ENCODE measurements at regions of chr5 and their contacts with region 1.

Region 1: DNA sequence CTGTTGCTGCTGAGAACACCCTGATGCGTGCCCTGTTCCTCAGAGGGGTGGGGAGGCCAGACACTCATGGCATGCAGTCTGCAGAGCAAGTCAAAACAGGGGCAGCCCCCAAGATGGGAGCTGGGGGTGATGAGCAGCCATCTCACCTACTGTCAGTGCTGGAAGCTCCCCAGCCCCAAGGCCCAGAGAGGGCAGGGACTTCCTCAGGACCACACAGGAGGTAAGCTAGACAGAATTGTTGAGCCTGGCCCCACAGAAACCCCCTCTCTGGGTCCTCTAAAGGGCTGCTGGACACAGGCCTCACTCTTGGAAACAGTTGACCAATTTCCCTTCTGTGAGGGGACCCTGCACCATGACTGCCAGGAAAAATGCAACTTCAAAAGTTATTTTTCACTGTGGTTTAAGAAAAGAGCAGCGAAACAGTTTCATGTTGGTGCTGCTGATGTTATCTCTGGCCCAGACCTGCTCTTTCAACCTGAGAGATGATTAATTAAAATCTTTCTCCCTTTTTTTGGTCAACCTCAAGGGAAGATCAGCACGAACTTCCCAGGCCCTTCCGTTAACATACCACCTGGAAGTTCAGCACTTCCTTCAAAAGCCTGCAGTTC is 9.6 kb downstream of the CSF2 start:
- DNase-seq: peak; percentile 76
- H3K4me3 Mint-ChIP-seq: peak overlapping the region; percentile 42
- H3K27ac Mint-ChIP-seq: peak overlapping the region; percentile 81
- H3K4me1 Mint-ChIP-seq: peaks cover 72% of the 10 kb centered on the region
- H3K27me3 Mint-ChIP-seq: no peaks in the 10 kb centered on the region

Region 2: DNA sequence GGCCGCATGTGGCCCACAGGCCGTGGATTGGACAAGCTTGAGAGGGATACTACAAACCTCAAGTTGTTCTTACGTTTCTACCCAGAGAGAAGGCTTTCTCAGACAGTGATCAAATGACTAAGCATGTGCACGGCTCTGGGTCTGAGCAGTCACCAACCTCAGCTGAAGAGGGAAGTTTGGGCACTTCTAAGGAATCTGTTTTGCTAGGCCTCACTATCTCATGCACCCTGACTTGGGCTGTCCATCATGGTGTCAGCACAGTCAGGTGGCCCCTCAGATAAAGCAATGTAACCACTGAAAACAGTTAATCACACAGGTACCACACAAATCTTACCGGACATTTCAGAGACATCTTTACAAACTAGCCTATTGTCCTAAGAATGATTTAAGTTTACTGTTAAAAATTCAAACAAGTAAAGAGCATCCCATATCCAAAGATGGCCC is 15.0 kb after region 1 on chr5:
- intact Hi-C with region 1: loop called (anchors 1 kb)
- DNase-seq: peak; percentile 72
- H3K4me3 Mint-ChIP-seq: peak overlapping the region; percentile 12
- H3K27ac Mint-ChIP-seq: peak overlapping the region; percentile 98
- H3K4me1 Mint-ChIP-seq: peaks cover 72% of the 10 kb centered on the region
- H3K27me3 Mint-ChIP-seq: no peaks in the 10 kb centered on the region

Measured in activated CD4-positive, alpha-beta T cell treated with anti-CD3 and anti-CD28 coated beads, Interleukin-2, amount 10 ng/mL, durations not matched to agents 24 days and 14 days (primary cell).